Endothelial cell of umbilical vein (primary cell): ENCODE measurements at regions of chr2 and their contacts with region 1.

Region 1: GRCh38 chr2:46876741-46877384 is 38.7 kb downstream of the MCFD2 start:
- DNase-seq: peak; percentile 80
- H3K4me3 ChIP-seq: no peak overlapping the region
- H3K27ac ChIP-seq: no peak overlapping the region
- H3K4me1 ChIP-seq: peaks cover 31% of the 10 kb centered on the region
- H3K27me3 ChIP-seq: no peaks in the 10 kb centered on the region
- CTCF ChIP-seq: peak; percentile 38 to 41
- POLR2A ChIP-seq: no peak

Region 2: DNA sequence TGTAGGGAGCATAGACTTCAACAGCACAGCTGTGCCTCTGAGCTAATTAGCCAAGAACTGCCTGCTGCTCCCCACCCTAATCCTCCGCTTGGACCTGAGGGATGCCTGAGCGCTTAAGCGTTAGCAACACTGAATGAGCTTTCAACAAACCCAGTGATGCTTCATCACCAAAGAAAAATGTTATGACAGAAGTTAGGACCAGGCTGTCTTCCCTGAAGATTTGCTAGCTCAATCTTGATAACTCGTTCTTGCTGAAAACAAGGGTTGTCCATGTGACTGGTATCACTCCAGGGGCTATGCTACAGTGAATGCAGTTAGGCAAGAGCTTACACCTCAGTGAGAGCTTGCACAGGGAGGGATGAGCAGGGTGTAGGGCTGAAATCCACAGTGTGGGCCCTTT is 1676.9 kb before region 1 on chr2:
- CTCF ChIA-PET with region 1: no interaction called
- POLR2A ChIA-PET with region 1: no interaction called
- dilution Hi-C with region 1: no loop called
- intact Hi-C with region 1: no loop called
- DNase-seq: no peak
- H3K4me3 ChIP-seq: no peak overlapping the region
- H3K27ac ChIP-seq: no peak overlapping the region
- H3K4me1 ChIP-seq: no peaks in the 10 kb centered on the region
- H3K27me3 ChIP-seq: no peaks in the 10 kb centered on the region
- CTCF ChIP-seq: no peak
- POLR2A ChIP-seq: no peak

Region 3: DNA sequence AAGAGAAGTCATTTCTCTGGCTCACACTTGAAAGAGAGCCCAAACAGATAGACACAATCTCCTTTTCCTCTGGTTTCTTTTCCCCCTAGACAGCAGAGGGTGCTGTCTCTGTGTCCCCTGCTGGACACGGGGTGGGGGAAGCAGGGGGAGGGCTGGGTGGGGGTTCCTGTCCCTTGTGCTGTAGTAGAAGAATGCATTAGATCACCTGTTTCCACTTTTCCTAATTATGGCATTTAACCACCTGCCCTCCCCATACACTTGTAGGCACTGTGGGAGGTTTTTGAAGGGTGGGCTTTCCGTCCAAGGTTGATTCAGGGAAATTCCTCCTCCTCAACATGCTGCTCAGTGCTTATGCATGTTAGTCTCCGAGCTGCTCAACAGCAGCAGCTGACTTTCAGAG is 785.9 kb before region 1 on chr2:
- CTCF ChIA-PET with region 1: no interaction called
- POLR2A ChIA-PET with region 1: no interaction called
- dilution Hi-C with region 1: no loop called
- intact Hi-C with region 1: no loop called
- DNase-seq: peak; percentile 33
- H3K4me3 ChIP-seq: no peak overlapping the region
- H3K27ac ChIP-seq: no peak overlapping the region
- H3K4me1 ChIP-seq: peaks cover 15% of the 10 kb centered on the region
- H3K27me3 ChIP-seq: no peaks in the 10 kb centered on the region
- CTCF ChIP-seq: peak in 1 of 2 donors; percentile 33
- POLR2A ChIP-seq: no peak

Region 4: GRCh38 chr2:46632349-46632748 is 244.5 kb before region 1 on chr2:
- CTCF ChIA-PET with region 1: interaction called, 5 read pairs
- POLR2A ChIA-PET with region 1: no interaction called
- dilution Hi-C with region 1: no loop called
- intact Hi-C with region 1: loop called (anchors 1 kb)
- DNase-seq: peak; percentile 79
- H3K4me3 ChIP-seq: no peak overlapping the region
- H3K27ac ChIP-seq: no peak overlapping the region
- H3K4me1 ChIP-seq: no peaks in the 10 kb centered on the region
- H3K27me3 ChIP-seq: no peaks in the 10 kb centered on the region
- CTCF ChIP-seq: peak; percentile 21 to 41
- POLR2A ChIP-seq: no peak

Region 5: DNA sequence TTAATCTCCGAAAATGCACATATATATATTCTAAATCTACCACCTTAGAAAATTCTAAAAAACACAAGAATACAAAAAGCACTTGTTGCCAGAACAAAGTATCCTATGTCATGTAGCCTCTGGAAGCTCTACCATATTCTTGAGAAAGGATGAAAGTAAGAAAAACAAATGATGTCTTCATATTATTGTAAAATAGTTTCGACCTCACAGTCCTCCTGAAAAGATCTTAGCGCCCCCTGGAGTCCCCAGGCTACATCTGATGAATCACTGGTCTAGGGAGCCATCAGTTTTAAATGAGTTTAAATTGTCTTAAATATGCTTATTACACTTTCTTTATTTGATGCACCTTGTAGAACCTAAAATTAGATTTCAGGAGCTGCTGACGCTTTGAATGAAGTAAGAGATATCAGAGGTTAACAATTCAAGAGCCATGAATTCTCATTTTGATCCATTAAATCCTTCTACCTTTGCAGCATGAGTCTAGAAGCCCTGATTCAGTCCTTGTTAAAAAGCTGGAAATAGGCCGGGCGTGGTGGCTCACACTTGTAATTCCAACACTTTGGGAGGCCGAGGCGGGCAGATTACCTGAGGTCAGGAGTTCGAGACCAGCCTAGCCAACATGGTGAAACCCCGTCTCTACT is 100.1 kb before region 1 on chr2:
- CTCF ChIA-PET with region 1: interaction called, 14 read pairs
- POLR2A ChIA-PET with region 1: no interaction called
- dilution Hi-C with region 1: no loop called
- intact Hi-C with region 1: loop called (anchors 2 kb)
- DNase-seq: peak; percentile 71
- H3K4me3 ChIP-seq: no peak overlapping the region
- H3K27ac ChIP-seq: no peak overlapping the region
- H3K4me1 ChIP-seq: no peaks in the 10 kb centered on the region
- H3K27me3 ChIP-seq: no peaks in the 10 kb centered on the region
- CTCF ChIP-seq: peak; percentile 72 to 75
- POLR2A ChIP-seq: no peak

Region 6: GRCh38 chr2:46812361-46813024 is 64.4 kb before region 1 on chr2:
- CTCF ChIA-PET with region 1: interaction called, 16 read pairs
- POLR2A ChIA-PET with region 1: no interaction called
- dilution Hi-C with region 1: no loop called
- intact Hi-C with region 1: loop called (anchors 2 kb)
- DNase-seq: peak; percentile 54
- H3K4me3 ChIP-seq: no peak overlapping the region
- H3K27ac ChIP-seq: no peak overlapping the region
- H3K4me1 ChIP-seq: peaks cover 17% of the 10 kb centered on the region
- H3K27me3 ChIP-seq: no peaks in the 10 kb centered on the region
- CTCF ChIP-seq: no peak
- POLR2A ChIP-seq: no peak

Region 7: GRCh38 chr2:46866770-46867246 is 10.1 kb before region 1 on chr2:
- CTCF ChIA-PET with region 1: interaction called, 15 read pairs
- POLR2A ChIA-PET with region 1: no interaction called
- dilution Hi-C with region 1: no loop called
- intact Hi-C with region 1: no loop called
- DNase-seq: peak; percentile 80
- H3K4me3 ChIP-seq: no peak overlapping the region
- H3K27ac ChIP-seq: peak overlapping the region; percentile 86
- H3K4me1 ChIP-seq: peaks cover 13% of the 10 kb centered on the region
- H3K27me3 ChIP-seq: no peaks in the 10 kb centered on the region
- CTCF ChIP-seq: no peak
- POLR2A ChIP-seq: no peak

Region 8: GRCh38 chr2:47016172-47016913 is 139.5 kb after region 1 on chr2:
- CTCF ChIA-PET with region 1: no interaction called
- POLR2A ChIA-PET with region 1: no interaction called
- dilution Hi-C with region 1: no loop called
- intact Hi-C with region 1: no loop called
- DNase-seq: peak; percentile 71
- H3K4me3 ChIP-seq: no peak overlapping the region
- H3K27ac ChIP-seq: peak overlapping the region; percentile 7
- H3K4me1 ChIP-seq: no peaks in the 10 kb centered on the region
- H3K27me3 ChIP-seq: no peaks in the 10 kb centered on the region
- CTCF ChIP-seq: peak in 1 of 2 donors; percentile 4
- POLR2A ChIP-seq: no peak